ENCODE measurements at regions of chr9 and their contacts with region 1.

Region 1: GRCh38 chr9:129783516-129784361 is 19.2 kb upstream of the TOR1B start:
- DNase-seq: peak in 2 of 3 donors; percentile 65 to 82
- ATAC-seq: peak; percentile 98
- H3K4me3 ChIP-seq: no peak overlapping the region
- H3K4me1 ChIP-seq: no peaks in the 10 kb centered on the region
- CTCF ChIP-seq: peak; percentile 67

Region 2: DNA sequence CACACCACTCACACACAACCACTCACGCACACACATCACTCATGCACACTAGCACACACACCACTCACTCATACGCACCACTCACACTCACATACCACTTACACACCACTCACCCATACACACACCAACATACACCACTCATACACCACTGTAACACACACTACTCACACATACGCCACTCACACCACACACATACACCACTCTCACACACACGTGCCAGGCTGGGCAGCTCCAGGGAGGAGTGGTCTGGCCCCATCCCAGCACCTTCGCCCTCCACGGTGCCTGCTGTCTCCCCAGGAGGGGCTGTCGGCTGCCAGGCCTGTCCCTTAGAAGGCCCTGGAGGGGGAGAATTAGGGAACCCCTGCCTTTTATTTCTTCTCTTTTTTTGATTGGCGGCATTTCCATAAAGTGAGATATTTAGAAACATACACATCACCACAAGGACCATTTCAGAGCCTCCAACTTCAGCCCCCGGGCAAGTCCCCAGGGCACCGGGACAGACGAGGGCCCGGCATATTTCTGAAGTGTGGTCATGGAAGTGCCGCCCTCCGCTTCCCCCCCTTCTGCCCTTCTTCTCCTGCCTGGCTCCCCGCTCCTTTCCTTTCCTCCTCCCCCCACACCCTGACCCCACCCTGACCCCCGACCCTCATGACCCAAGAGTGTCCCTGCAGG is 135.5 kb before region 1 on chr9:
- intact Hi-C with region 1: loop called in 1 of 2 experiments (anchors 5 kb)
- DNase-seq: no peak
- ATAC-seq: no peak
- H3K4me3 ChIP-seq: no peak overlapping the region
- H3K4me1 ChIP-seq: no peaks in the 10 kb centered on the region
- CTCF ChIP-seq: no peak

Region 3: DNA sequence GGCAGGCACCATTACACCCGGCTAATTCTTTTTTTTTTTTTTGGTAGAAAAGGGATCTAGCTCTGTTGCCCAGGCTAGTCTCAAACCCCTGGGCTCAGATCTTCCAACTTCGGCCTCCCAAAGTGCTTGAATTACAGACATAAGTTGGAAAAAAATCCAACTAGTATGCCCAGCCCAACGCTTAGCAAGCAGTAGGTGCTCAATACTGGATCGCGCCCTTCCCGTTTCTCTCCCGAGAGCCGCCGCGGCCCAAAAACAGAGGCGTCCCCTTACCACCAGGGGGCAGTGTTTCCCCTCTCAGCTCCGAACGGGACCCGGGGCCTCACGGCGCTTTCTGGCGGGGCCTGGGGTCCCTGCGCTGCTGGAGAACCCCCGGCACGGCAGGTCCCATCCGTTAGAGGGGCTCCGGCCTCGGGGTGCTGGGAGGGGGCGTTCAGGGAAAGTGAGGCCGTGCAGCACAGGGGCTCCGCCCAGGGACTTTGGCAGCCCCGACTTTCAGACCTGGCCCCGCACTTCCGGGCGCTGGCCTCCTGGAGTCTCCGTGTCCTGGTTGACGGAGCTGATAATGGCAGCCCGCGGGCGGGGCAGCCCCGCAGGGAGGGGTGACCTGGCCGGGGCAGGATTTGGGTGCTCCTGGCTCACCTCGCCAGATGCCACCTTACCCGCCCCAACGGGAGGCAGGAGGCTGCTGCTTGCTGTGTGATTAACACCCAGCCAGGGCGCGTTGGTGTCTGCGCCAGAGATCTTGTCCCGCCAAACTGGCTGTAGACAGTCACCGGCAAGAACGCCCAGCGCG is 46.1 kb before region 1 on chr9:
- intact Hi-C with region 1: loop called (anchors 5 kb)
- DNase-seq: peak; percentile 83 to 93 (median 92)
- ATAC-seq: peak; percentile 97
- H3K4me3 ChIP-seq: peak overlapping the region; percentile 18
- H3K4me1 ChIP-seq: peaks cover 3% of the 10 kb centered on the region
- CTCF ChIP-seq: peak; percentile 88

Region 4: DNA sequence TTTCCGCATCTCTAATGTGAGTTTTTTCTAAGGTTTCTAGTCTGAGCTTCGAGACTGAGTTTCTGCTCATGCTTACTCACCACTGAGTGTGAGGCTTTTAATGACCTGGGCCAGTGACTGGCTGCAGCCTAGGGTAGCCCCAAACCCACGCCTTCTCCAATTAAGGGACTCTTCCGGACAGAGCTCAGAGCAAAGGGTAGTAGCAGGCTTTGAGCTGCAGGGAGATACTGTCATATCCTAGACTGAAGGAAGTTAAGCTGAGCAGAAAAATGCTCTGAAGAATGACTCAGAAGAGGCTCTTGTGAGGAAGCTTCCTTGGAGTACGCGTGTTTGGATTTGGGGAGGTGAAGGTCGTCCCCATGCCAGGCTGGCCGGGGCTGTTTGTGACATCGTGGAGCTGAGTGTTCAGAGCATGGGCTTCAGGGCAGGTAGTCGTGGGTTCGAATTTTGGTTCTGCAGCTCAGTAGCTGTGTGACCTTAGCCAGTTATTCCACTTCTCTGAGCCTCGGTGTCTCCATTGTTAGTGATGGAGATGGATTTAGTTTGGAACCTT is 55.0 kb after region 1 on chr9:
- intact Hi-C with region 1: no loop called
- DNase-seq: no peak
- ATAC-seq: no peak
- H3K4me3 ChIP-seq: no peak overlapping the region
- H3K4me1 ChIP-seq: peaks cover 15% of the 10 kb centered on the region
- CTCF ChIP-seq: no peak